AG04450 (cell line): ENCODE measurements at regions of chr17 and their contacts with region 1.

Region 1: DNA sequence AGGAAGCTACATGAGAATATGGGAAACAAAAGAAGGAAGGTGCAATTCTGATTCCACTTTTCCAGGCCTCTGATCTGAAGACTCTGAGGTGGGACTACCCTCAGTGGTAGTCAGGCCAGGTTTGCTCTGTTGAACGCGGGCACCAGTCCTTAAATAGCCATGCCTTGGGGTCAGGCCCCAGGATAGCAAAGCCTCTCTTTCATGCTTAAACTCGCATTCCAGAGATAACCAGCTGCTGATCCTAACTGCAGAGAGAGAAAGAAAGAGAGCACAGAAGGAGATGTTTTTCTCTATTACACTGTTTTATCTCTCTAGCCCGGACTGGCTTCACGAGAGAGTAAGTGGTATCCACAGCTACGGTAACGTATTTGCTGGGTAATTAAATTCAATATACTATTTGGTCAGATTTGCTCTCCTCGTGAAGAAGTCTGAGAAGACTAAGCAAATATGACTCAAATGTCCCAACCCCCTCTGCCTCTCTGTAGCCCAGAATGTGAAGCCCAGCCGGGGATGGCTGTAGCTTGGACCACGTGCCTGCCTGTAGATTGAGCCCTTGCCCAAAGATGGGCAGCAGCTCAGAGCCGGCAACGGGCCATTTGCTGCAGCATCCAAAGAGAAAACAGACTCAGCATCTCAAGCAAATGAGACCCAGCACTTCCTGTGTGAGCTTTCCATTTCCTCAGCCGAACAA is 122.2 kb downstream of the SMG6 start:
- DNase-seq: peak; percentile 88
- H3K4me3 ChIP-seq: no peak overlapping the region
- H3K27ac ChIP-seq: peak overlapping the region; percentile 97
- H3K27me3 ChIP-seq: no peaks in the 10 kb centered on the region
- CTCF ChIP-seq: no peak

Region 2: GRCh38 chr17:2215616-2216364 is 34.4 kb after region 1 on chr17:
- CTCF ChIA-PET with region 1: no interaction called
- POLR2A ChIA-PET with region 1: interaction called, 23 read pairs
- DNase-seq: peak; percentile 85
- H3K4me3 ChIP-seq: peak overlapping the region; percentile 23
- H3K27ac ChIP-seq: peak overlapping the region; percentile 100
- H3K27me3 ChIP-seq: no peaks in the 10 kb centered on the region
- CTCF ChIP-seq: no peak